Body of pancreas (tissue), 4 donors: ENCODE measurements at regions of chr1 and their contacts with region 1.

Region 1: GRCh38 chr1:114982251-114982650 is 47.4 kb upstream of the TSHB start:
- DNase-seq: no peak
- ATAC-seq: no peak
- H3K4me3 ChIP-seq: no peak overlapping the region
- H3K27ac ChIP-seq: no peak overlapping the region
- H3K4me1 ChIP-seq: no peaks in the 10 kb centered on the region
- H3K27me3 ChIP-seq: no peaks in the 10 kb centered on the region
- CTCF ChIP-seq: no peak
- POLR2A ChIP-seq: no peak

Region 2: GRCh38 chr1:114868766-114869165 is 113.5 kb before region 1 on chr1:
- intact Hi-C with region 1: no loop called
- DNase-seq: no peak
- ATAC-seq: no peak
- H3K4me3 ChIP-seq: no peak overlapping the region
- H3K27ac ChIP-seq: no peak overlapping the region
- H3K4me1 ChIP-seq: no peaks in the 10 kb centered on the region
- H3K27me3 ChIP-seq: no peaks in the 10 kb centered on the region
- CTCF ChIP-seq: no peak
- POLR2A ChIP-seq: no peak

Region 3: DNA sequence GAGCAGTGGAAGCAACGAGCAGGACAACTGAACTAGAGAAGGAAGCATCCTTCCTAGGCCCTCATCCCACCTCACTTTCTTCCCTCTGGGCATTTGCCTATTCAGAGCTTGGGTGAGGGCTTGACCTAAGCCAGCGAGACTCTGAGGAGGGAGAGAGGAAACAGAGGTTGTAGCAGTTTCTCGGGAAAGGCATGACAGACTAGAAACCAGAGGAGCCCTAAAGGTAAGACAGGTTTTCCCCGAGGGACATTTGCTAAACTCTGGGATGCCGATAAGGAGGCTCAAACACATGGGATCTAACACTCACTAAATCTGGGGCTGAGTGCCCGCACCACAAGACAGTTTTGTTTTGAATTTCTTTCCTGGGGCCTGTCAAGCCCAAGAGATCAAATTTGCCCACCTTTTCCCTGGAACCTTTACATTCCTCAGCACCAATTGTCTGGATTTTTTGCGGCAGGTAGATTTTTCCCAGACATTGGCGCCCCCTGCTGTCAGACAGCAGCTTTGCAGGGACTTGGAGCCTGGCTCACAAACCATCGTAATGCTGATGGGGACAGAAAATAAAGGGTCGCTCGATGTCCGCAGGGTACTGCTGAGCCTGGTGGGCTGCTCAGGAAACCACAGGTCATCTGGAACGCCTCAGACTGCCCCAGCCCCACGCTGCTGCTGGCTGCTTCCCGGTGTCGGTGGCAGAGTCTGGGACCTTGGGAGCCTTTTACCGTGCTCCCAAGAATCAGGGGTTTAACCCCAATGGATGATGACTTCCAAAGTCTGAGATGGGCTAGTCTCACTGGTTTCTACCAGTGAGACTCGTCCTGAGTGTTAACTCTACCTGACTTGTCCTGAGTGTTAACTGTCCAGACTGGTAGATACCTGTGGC is 130.5 kb after region 1 on chr1:
- intact Hi-C with region 1: loop called (anchors 5 kb)
- DNase-seq: peak; percentile 34 to 47 (median 42)
- ATAC-seq: no peak
- H3K4me3 ChIP-seq: no peak overlapping the region
- H3K27ac ChIP-seq: no peak overlapping the region
- H3K4me1 ChIP-seq: no peaks in the 10 kb centered on the region
- H3K27me3 ChIP-seq: peaks cover 0 to 2% of the 10 kb centered on the region in 2 donors
- CTCF ChIP-seq: peak; percentile 77 to 91 (median 81)
- POLR2A ChIP-seq: no peak